Activated naive CD4-positive, alpha-beta T cell treated with anti-CD3 and anti-CD28 coated beads for 36 hours (primary cell): ENCODE measurements at regions of chr7 and their contacts with region 1.

Region 1: DNA sequence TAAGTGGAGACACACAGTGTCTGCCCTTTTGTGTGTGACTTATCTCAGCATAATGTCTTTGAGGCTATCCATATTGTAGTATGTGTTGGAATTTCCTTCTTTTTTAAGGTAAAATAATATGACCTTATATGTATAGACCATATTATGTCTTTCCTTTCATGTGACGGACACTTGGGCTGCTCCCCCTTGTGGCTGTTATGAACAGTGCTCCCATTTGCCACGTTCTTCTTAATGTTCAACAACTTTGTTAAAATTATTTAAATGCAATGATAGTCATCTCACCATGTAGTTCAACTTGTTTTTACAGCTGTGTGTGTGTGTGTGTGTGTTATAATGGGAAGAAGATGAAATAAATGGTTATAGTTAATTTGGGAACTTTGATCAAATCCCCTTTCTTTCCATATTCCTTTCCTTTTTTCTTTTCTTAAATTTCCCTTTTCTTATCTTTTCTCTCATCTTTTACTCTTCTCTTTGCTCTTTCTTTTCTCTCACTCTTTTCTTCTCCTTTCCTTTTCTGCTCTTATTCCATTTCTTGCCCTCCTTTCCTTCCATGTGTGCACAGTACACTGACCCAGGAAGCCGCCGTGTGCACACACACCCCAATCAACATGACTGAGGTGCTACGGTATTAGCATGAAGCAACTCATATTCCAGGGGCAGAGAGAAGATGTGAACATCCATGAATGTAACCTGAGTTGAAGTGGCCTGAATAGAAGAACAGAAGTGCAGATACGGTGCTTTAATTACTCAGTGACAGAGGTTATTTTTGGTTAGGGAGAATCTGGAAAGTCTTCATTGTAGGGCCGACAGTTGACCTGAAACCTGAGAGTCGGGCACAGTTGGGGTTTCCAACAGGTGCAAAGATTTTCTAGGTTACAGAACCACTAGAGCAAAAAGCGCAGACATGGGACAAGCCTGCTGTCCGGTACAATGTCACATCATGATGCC is 596.7 kb downstream of the SDK1 start:
- DNase-seq: peak; percentile 67
- H3K4me3 Mint-ChIP-seq: no peak overlapping the region
- H3K27ac Mint-ChIP-seq: no peak overlapping the region
- H3K4me1 Mint-ChIP-seq: no peaks in the 10 kb centered on the region
- H3K27me3 Mint-ChIP-seq: no peaks in the 10 kb centered on the region

Region 2: GRCh38 chr7:3393862-3394261 is 503.9 kb before region 1 on chr7:
- CTCF ChIA-PET with region 1: no interaction called
- intact Hi-C with region 1: loop called (anchors 5 kb)
- DNase-seq: no peak
- H3K4me3 Mint-ChIP-seq: no peak overlapping the region
- H3K27ac Mint-ChIP-seq: no peak overlapping the region
- H3K4me1 Mint-ChIP-seq: no peaks in the 10 kb centered on the region
- H3K27me3 Mint-ChIP-seq: no peaks in the 10 kb centered on the region

Region 3: GRCh38 chr7:3695602-3696001 is 202.1 kb before region 1 on chr7:
- CTCF ChIA-PET with region 1: no interaction called
- intact Hi-C with region 1: loop called (anchors 2 kb)
- DNase-seq: no peak
- H3K4me3 Mint-ChIP-seq: no peak overlapping the region
- H3K27ac Mint-ChIP-seq: no peak overlapping the region
- H3K4me1 Mint-ChIP-seq: peaks cover 13% of the 10 kb centered on the region
- H3K27me3 Mint-ChIP-seq: no peaks in the 10 kb centered on the region